K562 (cell line): ENCODE measurements at regions of chr2 and their contacts with region 1.

Region 1: DNA sequence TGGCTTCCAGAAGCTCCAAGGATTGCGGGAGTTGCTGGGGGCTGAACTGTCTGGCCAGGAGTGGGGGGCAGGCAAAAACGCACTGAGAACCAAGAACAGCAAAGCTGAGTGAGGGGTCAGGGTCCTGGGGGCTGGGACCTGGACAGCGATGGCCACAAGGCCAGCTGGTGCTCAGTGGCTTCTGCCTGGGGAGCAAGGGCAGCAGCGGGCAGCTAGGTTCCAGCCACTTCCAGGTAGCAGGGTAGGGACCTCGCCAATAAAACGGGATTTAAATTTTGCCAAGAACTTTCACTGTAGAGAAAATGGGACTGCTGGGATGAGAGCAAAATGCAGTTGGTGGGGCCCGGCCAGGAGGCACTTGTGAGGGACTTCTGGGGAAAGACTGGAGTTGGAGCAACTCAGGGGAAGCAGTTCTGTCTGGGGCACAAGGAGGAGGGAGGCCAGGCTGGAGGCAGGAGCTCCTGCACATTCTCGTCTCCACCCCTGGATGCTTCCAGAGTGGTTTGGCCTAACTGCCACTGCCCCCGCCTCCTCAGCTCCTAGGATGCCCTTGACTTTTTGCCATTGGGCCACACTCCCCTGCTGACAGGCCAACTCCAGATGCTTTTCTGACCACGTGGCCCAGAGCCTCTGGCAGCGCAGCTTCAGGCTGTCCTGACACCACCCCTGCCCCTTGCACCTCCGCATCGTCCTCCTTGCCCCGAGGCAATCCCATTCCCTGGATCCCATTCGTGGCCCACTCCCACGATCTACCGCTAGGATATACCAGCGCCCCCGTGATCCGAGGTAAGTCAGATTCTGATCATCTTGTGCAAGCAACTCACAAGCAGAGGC is 5.5 kb upstream of the CCDC74A start:
- DNase-seq: peak in 2 of 4 experiments; percentile 5 to 12
- ATAC-seq: peak; percentile 38
- H3K4me3 ChIP-seq: no peak overlapping the region
- H3K27ac ChIP-seq: no peak overlapping the region
- H3K4me1 ChIP-seq: peaks cover 0 to 6% of the 10 kb centered on the region in 2 experiments; a peak in 2 of 5 replicates
- H3K27me3 ChIP-seq: no peaks in the 10 kb centered on the region
- CTCF ChIP-seq: no peak
- EP300 ChIP-seq: no peak
- POLR2A ChIP-seq: peak; percentile 55; the same call in 1 of the 2 replicates
- RAD21 ChIP-seq: no peak

Region 2: GRCh38 chr2:130150181-130151144 is 1371.7 kb before region 1 on chr2:
- CTCF ChIA-PET with region 1: no interaction called
- POLR2A ChIA-PET with region 1: no interaction called
- in situ Hi-C with region 1: loop called (anchors 5 kb)
- intact Hi-C with region 1: no loop called
- DNase-seq: no peak
- ATAC-seq: peak; percentile 12
- H3K4me3 ChIP-seq: no peak overlapping the region
- H3K27ac ChIP-seq: no peak overlapping the region
- H3K4me1 ChIP-seq: no peaks in the 10 kb centered on the region
- H3K27me3 ChIP-seq: no peaks in the 10 kb centered on the region
- CTCF ChIP-seq: no peak
- EP300 ChIP-seq: no peak
- POLR2A ChIP-seq: no peak; the same call in 1 of the 2 replicates
- RAD21 ChIP-seq: no peak

Region 3: DNA sequence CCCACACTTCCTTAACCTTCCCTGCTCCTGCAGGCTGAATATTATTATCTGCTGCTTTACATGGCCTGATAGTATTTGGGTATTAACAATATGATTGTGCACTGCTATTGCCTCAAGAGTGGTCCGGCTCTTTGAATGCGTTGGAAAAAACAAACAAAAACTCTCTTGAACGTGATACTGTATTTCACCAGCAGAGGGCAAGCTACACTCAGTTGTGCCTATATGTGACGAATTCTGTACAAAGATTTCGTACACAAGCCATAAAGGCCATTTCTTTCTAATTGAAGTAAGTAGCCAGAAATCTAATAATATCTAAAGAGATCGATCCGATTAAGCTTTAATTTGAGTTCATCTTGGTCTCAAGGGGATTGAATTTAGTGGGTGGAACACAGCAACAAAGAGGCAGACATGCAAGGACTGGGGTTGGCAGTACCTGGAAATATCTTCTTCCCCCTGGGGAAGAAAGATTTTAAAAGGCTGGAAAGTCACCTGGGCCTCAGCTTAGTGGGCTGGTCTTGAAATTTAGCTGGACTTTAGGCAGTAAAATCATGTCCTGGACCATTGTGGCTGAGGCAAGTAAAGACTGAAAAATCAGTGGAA is 108.9 kb before region 1 on chr2:
- CTCF ChIA-PET with region 1: no interaction called
- POLR2A ChIA-PET with region 1: no interaction called
- in situ Hi-C with region 1: no loop called
- intact Hi-C with region 1: loop called (anchors 5 kb)
- DNase-seq: peak; percentile 47 to 71 (median 49)
- ATAC-seq: peak; percentile 91
- H3K4me3 ChIP-seq: no peak overlapping the region
- H3K27ac ChIP-seq: no peak overlapping the region
- H3K4me1 ChIP-seq: no peaks in the 10 kb centered on the region
- H3K27me3 ChIP-seq: peaks cover 16 to 27% of the 10 kb centered on the region in 2 experiments; a peak in 4 of 5 replicates
- CTCF ChIP-seq: peak; percentile 65 to 89 (median 78); a peak in 5 of 6 replicates
- EP300 ChIP-seq: no peak
- POLR2A ChIP-seq: no peak
- RAD21 ChIP-seq: peak; percentile 89 to 96

Region 4: DNA sequence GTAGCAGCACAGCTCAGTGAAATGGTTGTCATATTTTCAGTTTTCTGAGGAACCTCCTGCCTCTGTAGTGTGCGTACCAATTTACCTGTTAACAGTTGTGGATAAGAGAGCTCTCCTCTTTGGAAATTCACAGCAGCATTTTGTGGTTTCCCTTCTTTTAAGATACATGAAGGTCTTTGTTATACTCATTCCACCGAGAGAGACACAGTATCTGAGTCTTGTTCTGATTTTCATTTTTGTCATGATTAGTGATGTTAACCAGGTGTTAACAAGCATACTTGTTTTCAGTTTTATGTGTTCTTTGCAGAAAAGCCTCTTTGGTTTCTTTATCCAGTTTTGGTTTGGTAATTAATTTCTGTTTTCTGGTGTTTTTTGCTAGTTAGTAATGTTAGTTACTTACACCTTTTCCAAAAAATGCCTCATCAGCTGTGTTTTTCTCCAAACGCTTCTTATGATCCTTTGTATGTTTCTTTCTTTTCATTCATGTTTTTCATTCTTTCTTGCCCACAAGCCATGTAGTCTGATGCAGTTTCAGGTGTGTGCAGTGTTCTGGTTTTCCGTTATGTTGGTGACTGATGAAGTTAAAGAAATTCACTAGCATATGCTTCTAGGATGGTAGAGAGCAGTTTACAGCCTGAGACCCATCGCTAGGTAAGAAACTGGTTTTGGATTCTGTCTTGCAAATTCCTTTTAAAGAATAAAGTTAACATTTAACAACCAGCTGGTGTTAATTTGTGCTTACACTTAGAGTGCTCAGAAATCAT is 35.6 kb after region 1 on chr2:
- CTCF ChIA-PET with region 1: no interaction called
- POLR2A ChIA-PET with region 1: no interaction called
- in situ Hi-C with region 1: no loop called
- intact Hi-C with region 1: no loop called
- DNase-seq: no peak
- ATAC-seq: no peak
- H3K4me3 ChIP-seq: no peak overlapping the region
- H3K27ac ChIP-seq: no peak overlapping the region
- H3K4me1 ChIP-seq: no peaks in the 10 kb centered on the region
- H3K27me3 ChIP-seq: peaks cover 8 to 18% of the 10 kb centered on the region in 2 experiments; a peak in 2 of 5 replicates
- CTCF ChIP-seq: no peak
- EP300 ChIP-seq: no peak
- POLR2A ChIP-seq: no peak
- RAD21 ChIP-seq: no peak